ENCODE measurements at regions of chr15 and their contacts with region 1.

Region 1: GRCh38 chr15:25832158-25832557 is 31.0 kb downstream of the ATP10A start:
- DNase-seq: no peak
- H3K4me3 Mint-ChIP-seq: no peak overlapping the region
- H3K27ac Mint-ChIP-seq: peak overlapping the region; percentile 87
- H3K4me1 Mint-ChIP-seq: peaks cover 28% of the 10 kb centered on the region
- H3K27me3 Mint-ChIP-seq: no peaks in the 10 kb centered on the region

Region 2: DNA sequence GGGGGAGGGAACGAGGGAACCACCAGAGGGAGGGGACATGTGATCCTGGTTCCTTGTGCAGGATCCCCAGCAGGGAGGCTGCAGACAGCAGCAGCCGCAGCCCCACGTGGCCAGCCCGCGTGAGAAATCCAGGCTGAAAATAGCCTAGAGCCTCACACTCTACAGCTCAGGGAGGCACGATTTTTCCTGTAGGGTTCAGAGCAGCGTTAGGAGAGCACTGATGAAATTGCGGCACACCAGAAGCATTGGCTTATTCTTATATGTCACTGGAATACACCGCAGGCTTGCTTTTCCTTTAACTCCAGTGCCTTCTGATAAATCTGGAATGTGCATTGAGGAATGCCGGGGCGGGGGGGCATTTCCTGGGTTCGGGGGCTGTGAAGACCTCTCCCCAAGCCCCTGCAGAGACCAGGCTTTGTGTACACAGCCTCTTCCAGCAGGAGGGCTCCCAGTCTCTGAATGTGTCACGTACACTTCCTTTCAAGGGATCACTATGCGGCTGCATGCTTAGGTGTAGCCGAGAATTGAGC is 162.1 kb before region 1 on chr15:
- intact Hi-C with region 1: no loop called
- DNase-seq: no peak
- H3K4me3 Mint-ChIP-seq: no peak overlapping the region
- H3K27ac Mint-ChIP-seq: no peak overlapping the region
- H3K4me1 Mint-ChIP-seq: peaks cover 8% of the 10 kb centered on the region
- H3K27me3 Mint-ChIP-seq: peaks cover 18% of the 10 kb centered on the region

Region 3: GRCh38 chr15:25790000-25790660 is 42.0 kb before region 1 on chr15:
- intact Hi-C with region 1: loop called (anchors 1 kb)
- DNase-seq: peak; percentile 33
- H3K4me3 Mint-ChIP-seq: no peak overlapping the region
- H3K27ac Mint-ChIP-seq: peak overlapping the region; percentile 87
- H3K4me1 Mint-ChIP-seq: peaks cover 56% of the 10 kb centered on the region
- H3K27me3 Mint-ChIP-seq: no peaks in the 10 kb centered on the region

Region 4: GRCh38 chr15:25863111-25863967 is 31.2 kb after region 1 on chr15 and contains the start of gene ATP10A:
- intact Hi-C with region 1: loop called (anchors 1 kb)
- DNase-seq: peak; percentile 68
- H3K4me3 Mint-ChIP-seq: peak within 1 kb of the TSS; percentile 95
- H3K27ac Mint-ChIP-seq: peak within 1 kb of the TSS; percentile 91
- H3K4me1 Mint-ChIP-seq: peaks cover 52% of the 10 kb centered on the region
- H3K27me3 Mint-ChIP-seq: peaks cover 9% of the 10 kb centered on the region
- total RNA-seq, gene ATP10A: 42.8 and 47.9 TPM in 2 replicates

Measured in activated T-helper 1 cell treated with anti-CD3 and anti-CD28 coated beads, Interleukin-12 subunit alpha, Interleukin-12 subunit beta, Interleukin-2, Interleukin-4 antibody, amounts not matched to agents 30 ng/mL and 10 ng/mL and 1 ng/mL, durations not matched to agents 14 hours and 24 hours and 36 hours (primary cell).